Naive thymus-derived CD4-positive, alpha-beta T cell (primary cell): ENCODE measurements at regions of chr2 and their contacts with region 1.

Region 1: GRCh38 chr2:206783718-206784117 is 18.3 kb downstream of the FASTKD2 start:
- DNase-seq: no peak
- ATAC-seq: peak; percentile 36
- H3K4me3 ChIP-seq: no peak overlapping the region
- H3K4me3 Mint-ChIP-seq: no peak overlapping the region
- H3K27ac ChIP-seq: no peak overlapping the region
- H3K27ac Mint-ChIP-seq: peak overlapping the region in 2 of 9 donors; percentile 22 to 58
- H3K4me1 ChIP-seq: no peaks in the 10 kb centered on the region
- H3K4me1 Mint-ChIP-seq: peaks cover 3 to 30% (median 19%) of the 10 kb centered on the region in 7 donors
- H3K27me3 ChIP-seq: no peaks in the 10 kb centered on the region
- H3K27me3 Mint-ChIP-seq: no peaks in the 10 kb centered on the region

Region 2: GRCh38 chr2:206392118-206392517 is 391.6 kb before region 1 on chr2:
- CTCF ChIA-PET with region 1: no interaction called
- POLR2A ChIA-PET with region 1: no interaction called
- intact Hi-C with region 1: loop called in 1 of 2 experiments (anchors 5 kb)
- DNase-seq: no peak
- ATAC-seq: peak; percentile 37
- H3K4me3 ChIP-seq: no peak overlapping the region
- H3K4me3 Mint-ChIP-seq: no peak overlapping the region
- H3K27ac ChIP-seq: no peak overlapping the region
- H3K27ac Mint-ChIP-seq: no peak overlapping the region
- H3K4me1 ChIP-seq: no peaks in the 10 kb centered on the region
- H3K4me1 Mint-ChIP-seq: no peaks in the 10 kb centered on the region
- H3K27me3 ChIP-seq: no peaks in the 10 kb centered on the region
- H3K27me3 Mint-ChIP-seq: peaks cover 0 to 5% (median 0%) of the 10 kb centered on the region in 5 donors

Region 3: DNA sequence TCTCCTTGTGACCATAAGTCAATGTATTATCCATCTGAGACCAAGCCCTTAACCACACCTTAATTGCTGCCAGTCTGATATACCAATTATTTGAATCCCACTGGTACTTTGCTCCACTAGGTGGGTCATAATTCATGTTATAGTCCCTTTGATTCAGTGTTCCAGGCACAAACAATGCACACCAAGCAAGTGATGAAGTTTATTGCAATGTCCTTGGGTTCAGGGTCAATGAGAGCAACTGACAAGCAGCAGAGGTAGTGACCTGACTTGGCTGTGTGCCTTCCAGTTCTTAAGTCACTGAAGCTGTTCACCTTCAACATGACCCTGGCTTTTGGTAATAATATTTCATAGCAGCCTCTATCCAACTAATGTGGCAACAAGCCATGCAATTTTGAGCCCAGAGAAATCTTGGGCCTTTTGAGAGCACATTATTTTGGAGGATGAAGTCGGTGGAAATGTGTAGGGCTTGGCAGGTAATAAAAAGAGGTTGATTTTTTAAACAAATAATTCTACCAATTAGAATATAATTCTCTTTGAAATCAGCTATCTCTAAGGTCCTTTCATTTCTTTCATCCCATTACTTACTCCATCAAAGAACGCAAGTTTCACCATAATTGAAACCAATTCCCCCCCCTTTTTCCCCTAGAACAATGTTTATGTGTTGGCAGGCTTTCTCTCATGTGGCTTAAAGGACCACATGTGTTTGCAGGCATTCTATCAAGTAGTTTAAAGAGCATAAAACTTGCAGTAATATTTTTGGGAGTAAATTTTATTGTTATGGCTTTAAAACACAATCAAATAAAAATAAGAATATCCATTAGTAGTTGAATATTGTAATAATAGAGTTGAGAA is 152.5 kb after region 1 on chr2:
- CTCF ChIA-PET with region 1: no interaction called
- POLR2A ChIA-PET with region 1: no interaction called
- intact Hi-C with region 1: no loop called
- DNase-seq: no peak
- ATAC-seq: no peak
- H3K4me3 ChIP-seq: no peak overlapping the region
- H3K4me3 Mint-ChIP-seq: no peak overlapping the region
- H3K27ac ChIP-seq: no peak overlapping the region
- H3K27ac Mint-ChIP-seq: no peak overlapping the region
- H3K4me1 ChIP-seq: no peaks in the 10 kb centered on the region
- H3K4me1 Mint-ChIP-seq: no peaks in the 10 kb centered on the region
- H3K27me3 ChIP-seq: no peaks in the 10 kb centered on the region
- H3K27me3 Mint-ChIP-seq: no peaks in the 10 kb centered on the region